ENCODE measurements at regions of chr20 and their contacts with region 1.

Region 1: GRCh38 chr20:58309575-58310290 is at the start of gene RAB22A:
- DNase-seq: peak; percentile 81
- H3K4me3 Mint-ChIP-seq: peak within 1 kb of the TSS; percentile 93
- H3K27ac Mint-ChIP-seq: peak within 1 kb of the TSS; percentile 90
- H3K4me1 Mint-ChIP-seq: peaks cover 72% of the 10 kb centered on the region
- H3K27me3 Mint-ChIP-seq: no peaks in the 10 kb centered on the region
- total RNA-seq, gene RAB22A: 9.3 to 9.8 TPM

Region 2: DNA sequence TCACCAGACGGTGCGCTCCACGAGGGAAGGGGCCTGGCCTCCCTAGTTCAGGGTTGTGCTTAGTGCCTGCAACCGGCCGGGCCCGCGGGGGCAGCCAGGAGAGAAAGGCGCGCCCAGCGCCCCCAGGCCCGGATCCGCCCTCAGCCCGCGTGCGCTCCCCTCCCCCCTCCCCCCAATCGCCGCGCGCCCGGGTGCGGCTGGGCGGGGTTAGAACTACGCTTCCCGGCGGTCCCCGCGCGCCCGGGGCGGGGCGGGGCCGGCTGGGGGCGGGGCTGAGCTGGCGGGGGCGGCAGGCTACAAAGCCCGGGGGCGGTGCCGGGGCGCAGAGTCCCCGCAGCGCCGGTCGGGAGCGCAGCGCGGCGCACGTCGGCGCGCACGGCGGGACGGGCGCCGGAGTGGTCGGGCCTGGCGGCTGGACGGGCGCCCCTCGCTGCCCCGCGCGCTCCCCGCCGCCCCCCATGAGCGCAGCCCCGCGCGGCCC is 918.6 kb before region 1 on chr20 and contains the start of gene RBM38:
- CTCF ChIA-PET with region 1: no interaction called
- intact Hi-C with region 1: loop called (anchors 2 kb)
- DNase-seq: peak; percentile 80
- H3K4me3 Mint-ChIP-seq: peak within 1 kb of the TSS; percentile 90
- H3K27ac Mint-ChIP-seq: peak within 1 kb of the TSS; percentile 97
- H3K4me1 Mint-ChIP-seq: peaks cover 46% of the 10 kb centered on the region
- H3K27me3 Mint-ChIP-seq: no peaks in the 10 kb centered on the region
- total RNA-seq, gene RBM38: 60.3 to 63.1 TPM

Region 3: GRCh38 chr20:58236612-58237330 is 73.0 kb before region 1 on chr20:
- CTCF ChIA-PET with region 1: no interaction called
- intact Hi-C with region 1: loop called (anchors 1 kb)
- DNase-seq: peak; percentile 91
- H3K4me3 Mint-ChIP-seq: peak overlapping the region; percentile 83
- H3K27ac Mint-ChIP-seq: peak overlapping the region; percentile 88
- H3K4me1 Mint-ChIP-seq: peaks cover 23% of the 10 kb centered on the region
- H3K27me3 Mint-ChIP-seq: no peaks in the 10 kb centered on the region

Region 4: GRCh38 chr20:58330687-58331086 is 21.0 kb after region 1 on chr20:
- CTCF ChIA-PET with region 1: no interaction called
- intact Hi-C with region 1: no loop called
- DNase-seq: no peak
- H3K4me3 Mint-ChIP-seq: no peak overlapping the region
- H3K27ac Mint-ChIP-seq: no peak overlapping the region
- H3K4me1 Mint-ChIP-seq: peaks cover 34% of the 10 kb centered on the region
- H3K27me3 Mint-ChIP-seq: no peaks in the 10 kb centered on the region

Region 5: GRCh38 chr20:58352468-58352867 is 42.7 kb after region 1 on chr20:
- CTCF ChIA-PET with region 1: no interaction called
- intact Hi-C with region 1: loop called (anchors 1 kb)
- DNase-seq: peak; percentile 48
- H3K4me3 Mint-ChIP-seq: no peak overlapping the region
- H3K27ac Mint-ChIP-seq: no peak overlapping the region
- H3K4me1 Mint-ChIP-seq: peaks cover 5% of the 10 kb centered on the region
- H3K27me3 Mint-ChIP-seq: no peaks in the 10 kb centered on the region

Region 6: GRCh38 chr20:58888521-58889333 is 579.0 kb after region 1 on chr20:
- CTCF ChIA-PET with region 1: no interaction called
- intact Hi-C with region 1: loop called (anchors 2 kb)
- DNase-seq: peak; percentile 89
- H3K4me3 Mint-ChIP-seq: peak overlapping the region; percentile 84
- H3K27ac Mint-ChIP-seq: no peak overlapping the region
- H3K4me1 Mint-ChIP-seq: peaks cover 27% of the 10 kb centered on the region
- H3K27me3 Mint-ChIP-seq: no peaks in the 10 kb centered on the region

Region 7: GRCh38 chr20:59253779-59254319 is 944.1 kb after region 1 on chr20:
- CTCF ChIA-PET with region 1: no interaction called
- intact Hi-C with region 1: loop called (anchors 10 kb)
- DNase-seq: peak; percentile 64
- H3K4me3 Mint-ChIP-seq: peak overlapping the region; percentile 16
- H3K27ac Mint-ChIP-seq: peak overlapping the region; percentile 92
- H3K4me1 Mint-ChIP-seq: peaks cover 50% of the 10 kb centered on the region
- H3K27me3 Mint-ChIP-seq: no peaks in the 10 kb centered on the region

Measured in activated naive CD4-positive, alpha-beta T cell treated with anti-CD3 and anti-CD28 coated beads for 36 hours (primary cell).